K562 (cell line): ENCODE measurements at regions of chr5 and their contacts with region 1.

Region 1: GRCh38 chr5:148403344-148403743 is 19.6 kb downstream of the FBXO38 start:
- DNase-seq: no peak
- ATAC-seq: no peak
- H3K4me3 ChIP-seq: no peak overlapping the region
- H3K27ac ChIP-seq: no peak overlapping the region
- H3K4me1 ChIP-seq: no peaks in the 10 kb centered on the region
- H3K27me3 ChIP-seq: no peaks in the 10 kb centered on the region
- CTCF ChIP-seq: no peak
- EP300 ChIP-seq: no peak
- POLR2A ChIP-seq: no peak
- RAD21 ChIP-seq: no peak

Region 2: GRCh38 chr5:148437249-148437648 is 33.9 kb after region 1 on chr5:
- CTCF ChIA-PET with region 1: no interaction called
- POLR2A ChIA-PET with region 1: no interaction called
- in situ Hi-C with region 1: loop called (anchors 5 kb)
- intact Hi-C with region 1: no loop called
- DNase-seq: no peak
- ATAC-seq: no peak; the same call in 2 of the 3 replicates
- H3K4me3 ChIP-seq: no peak overlapping the region
- H3K27ac ChIP-seq: no peak overlapping the region; the same call in 2 of the 3 replicates
- H3K4me1 ChIP-seq: no peaks in the 10 kb centered on the region
- H3K27me3 ChIP-seq: no peaks in the 10 kb centered on the region
- CTCF ChIP-seq: no peak
- EP300 ChIP-seq: peak; percentile 40; the same call in 1 of the 2 replicates
- POLR2A ChIP-seq: no peak
- RAD21 ChIP-seq: no peak

Region 3: DNA sequence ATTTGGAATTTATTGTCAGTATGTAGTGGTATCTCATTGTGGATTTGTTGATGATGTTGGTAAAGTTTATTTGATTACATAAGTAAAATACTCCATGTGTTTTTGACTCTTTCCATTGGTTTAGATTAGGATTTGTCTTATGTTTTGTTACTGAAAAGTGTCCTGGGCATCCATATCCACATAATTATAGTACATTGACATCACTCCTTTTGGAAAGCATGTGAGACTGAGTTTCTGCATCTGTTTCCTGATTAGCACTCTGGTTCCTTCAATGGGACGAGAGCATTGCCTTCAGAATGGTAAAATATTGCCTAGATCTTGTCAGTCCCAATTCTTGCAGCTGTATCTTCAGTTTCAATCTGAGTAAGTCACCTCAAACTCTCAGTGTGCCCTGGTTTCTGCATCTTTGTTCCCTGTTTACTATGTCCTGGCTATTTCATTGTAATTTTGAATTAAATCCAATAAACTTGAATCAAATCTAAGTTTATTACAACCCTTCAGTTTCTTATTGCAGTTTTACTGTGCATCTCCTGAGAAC is 108.5 kb after region 1 on chr5:
- CTCF ChIA-PET with region 1: no interaction called
- POLR2A ChIA-PET with region 1: no interaction called
- in situ Hi-C with region 1: no loop called
- intact Hi-C with region 1: no loop called
- DNase-seq: no peak
- ATAC-seq: no peak
- H3K4me3 ChIP-seq: no peak overlapping the region
- H3K27ac ChIP-seq: no peak overlapping the region
- H3K4me1 ChIP-seq: no peaks in the 10 kb centered on the region
- H3K27me3 ChIP-seq: no peaks in the 10 kb centered on the region; a peak in 1 of 5 replicates
- CTCF ChIP-seq: no peak
- EP300 ChIP-seq: no peak
- POLR2A ChIP-seq: no peak
- RAD21 ChIP-seq: no peak

Region 4: DNA sequence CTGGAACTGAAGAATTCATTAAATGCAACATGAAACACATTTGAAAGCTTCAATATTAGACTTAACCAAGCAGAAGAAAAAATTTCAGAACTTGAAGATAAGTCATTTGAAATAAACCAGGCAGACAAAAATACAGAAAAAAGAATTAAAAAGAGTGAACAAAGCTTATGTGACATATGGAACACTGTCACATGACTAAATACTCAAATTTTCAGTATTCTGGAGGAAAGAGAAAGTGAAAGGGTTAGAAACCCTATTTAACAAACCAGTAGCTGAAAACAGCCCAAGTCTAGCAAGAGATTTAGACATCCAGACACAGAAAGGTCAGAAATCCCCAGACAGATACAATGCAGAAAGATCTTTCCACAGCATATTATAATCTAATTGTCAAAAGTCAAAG is 696.6 kb after region 1 on chr5:
- CTCF ChIA-PET with region 1: no interaction called
- POLR2A ChIA-PET with region 1: no interaction called
- in situ Hi-C with region 1: no loop called
- intact Hi-C with region 1: no loop called
- DNase-seq: no peak
- ATAC-seq: no peak
- H3K4me3 ChIP-seq: no peak overlapping the region
- H3K27ac ChIP-seq: no peak overlapping the region
- H3K4me1 ChIP-seq: no peaks in the 10 kb centered on the region
- H3K27me3 ChIP-seq: no peaks in the 10 kb centered on the region
- CTCF ChIP-seq: no peak
- EP300 ChIP-seq: no peak
- POLR2A ChIP-seq: no peak
- RAD21 ChIP-seq: no peak